ENCODE measurements at regions of chr17 and their contacts with region 1.

Region 1: GRCh38 chr17:17681187-17681848 is at the start of gene RAI1:
- DNase-seq: peak; percentile 93
- H3K4me3 ChIP-seq: peak within 1 kb of the TSS; percentile 82
- H3K27ac ChIP-seq: peak within 1 kb of the TSS; percentile 94
- H3K4me1 ChIP-seq: peaks cover 28% of the 10 kb centered on the region
- H3K27me3 ChIP-seq: no peaks in the 10 kb centered on the region
- CTCF ChIP-seq: peak; percentile 52; the same call in 1 of the 2 replicates
- total RNA-seq, gene RAI1: 46.8 and 58.9 TPM in 2 replicates

Region 2: DNA sequence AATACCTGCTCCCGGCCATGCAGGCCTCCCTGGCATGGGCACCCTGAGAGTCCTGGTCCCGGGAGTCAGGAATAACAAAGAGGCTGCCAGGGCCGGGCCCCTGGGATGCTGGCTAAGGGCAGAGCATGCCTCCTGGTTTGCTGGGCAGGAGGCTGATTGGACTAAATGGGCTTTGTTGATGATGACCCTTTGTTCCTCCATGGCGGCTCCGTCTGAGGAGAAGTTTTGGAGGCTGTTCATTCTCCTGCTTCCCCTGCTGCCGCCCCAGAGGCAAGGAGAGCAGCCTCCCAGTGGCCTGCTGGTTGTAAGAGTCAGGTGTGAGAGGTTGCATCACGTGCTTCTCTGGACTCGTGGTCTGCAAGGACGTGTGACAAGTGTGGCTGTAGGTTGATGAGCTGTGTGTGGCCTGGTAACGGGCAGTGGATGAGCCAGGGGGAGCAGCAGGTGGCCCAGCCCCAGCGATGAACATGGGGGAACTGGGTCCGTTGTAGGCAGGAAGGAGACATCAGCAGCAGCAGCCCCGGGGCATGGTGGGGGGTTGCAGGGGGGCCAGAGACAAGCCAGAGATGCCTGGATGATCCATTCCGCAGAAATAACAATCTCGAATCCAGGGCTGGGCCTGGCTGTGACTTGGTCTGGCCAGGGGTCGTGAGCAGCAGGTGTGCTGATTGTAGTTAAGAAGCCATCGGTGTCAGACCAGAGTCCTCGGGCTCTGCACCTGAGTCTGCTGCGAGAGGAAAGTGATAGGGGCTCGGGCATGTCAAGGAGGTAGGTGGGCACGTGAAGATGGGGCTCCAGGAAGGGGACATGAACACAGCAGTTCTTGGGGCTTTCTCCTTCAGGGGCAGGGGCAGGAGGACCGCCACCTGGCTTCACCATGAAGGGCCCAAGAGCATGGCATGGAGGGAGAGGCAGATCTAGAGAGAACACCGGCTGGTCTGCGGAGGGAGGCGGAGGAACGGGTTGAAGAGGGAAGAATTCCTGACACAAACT is 810.8 kb before region 1 on chr17:
- CTCF ChIA-PET with region 1: no interaction called
- POLR2A ChIA-PET with region 1: no interaction called
- intact Hi-C with region 1: no loop called
- DNase-seq: no peak
- H3K4me3 ChIP-seq: no peak overlapping the region
- H3K27ac ChIP-seq: no peak overlapping the region
- H3K4me1 ChIP-seq: peaks cover 9% of the 10 kb centered on the region
- H3K27me3 ChIP-seq: no peaks in the 10 kb centered on the region
- CTCF ChIP-seq: no peak

Region 3: DNA sequence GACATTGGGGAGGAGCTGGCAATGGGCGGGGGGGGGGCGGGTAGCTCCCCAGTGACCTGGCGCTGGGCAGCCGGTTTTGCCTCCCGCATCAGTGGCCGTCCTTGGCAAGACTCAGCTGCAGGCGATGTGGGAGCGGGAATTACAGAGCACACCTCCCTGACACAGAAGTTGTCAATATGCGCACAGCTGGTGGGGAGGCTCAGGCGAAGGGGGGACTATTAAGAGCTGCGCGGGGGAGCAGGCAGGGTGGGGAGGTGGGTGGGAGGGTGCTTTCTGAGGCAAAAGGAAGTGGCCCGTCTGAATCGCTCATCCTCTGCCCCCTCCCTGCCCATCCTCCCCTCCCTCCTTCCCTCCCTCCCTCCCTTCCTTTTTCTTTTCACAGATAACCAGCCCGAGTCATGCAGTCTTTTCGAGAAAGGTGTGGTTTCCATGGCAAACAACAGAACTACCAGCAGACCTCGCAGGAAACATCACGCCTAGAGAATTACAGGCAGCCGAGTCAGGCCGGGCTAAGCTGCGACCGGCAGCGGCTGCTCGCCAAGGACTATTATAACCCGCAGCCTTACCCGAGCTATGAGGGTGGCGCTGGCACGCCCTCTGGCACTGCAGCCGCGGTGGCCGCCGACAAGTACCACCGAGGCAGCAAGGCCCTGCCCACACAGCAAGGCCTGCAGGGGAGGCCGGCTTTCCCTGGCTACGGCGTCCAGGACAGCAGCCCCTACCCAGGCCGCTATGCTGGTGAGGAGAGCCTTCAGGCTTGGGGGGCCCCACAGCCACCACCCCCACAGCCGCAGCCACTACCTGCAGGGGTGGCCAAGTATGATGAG is 111.4 kb after region 1 on chr17:
- CTCF ChIA-PET with region 1: no interaction called
- POLR2A ChIA-PET with region 1: no interaction called
- intact Hi-C with region 1: loop called (anchors 5 kb)
- DNase-seq: peak; percentile 84
- H3K4me3 ChIP-seq: peak overlapping the region; percentile 10
- H3K27ac ChIP-seq: peak overlapping the region; percentile 30
- H3K4me1 ChIP-seq: peaks cover 58% of the 10 kb centered on the region
- H3K27me3 ChIP-seq: no peaks in the 10 kb centered on the region
- CTCF ChIP-seq: no peak

Region 4: GRCh38 chr17:17812211-17813057 is 131.1 kb after region 1 on chr17:
- CTCF ChIA-PET with region 1: no interaction called
- POLR2A ChIA-PET with region 1: no interaction called
- intact Hi-C with region 1: loop called (anchors 5 kb)
- DNase-seq: peak; percentile 76
- H3K4me3 ChIP-seq: no peak overlapping the region
- H3K27ac ChIP-seq: peak overlapping the region; percentile 38
- H3K4me1 ChIP-seq: peaks cover 37% of the 10 kb centered on the region
- H3K27me3 ChIP-seq: no peaks in the 10 kb centered on the region
- CTCF ChIP-seq: peak; percentile 96

Region 5: DNA sequence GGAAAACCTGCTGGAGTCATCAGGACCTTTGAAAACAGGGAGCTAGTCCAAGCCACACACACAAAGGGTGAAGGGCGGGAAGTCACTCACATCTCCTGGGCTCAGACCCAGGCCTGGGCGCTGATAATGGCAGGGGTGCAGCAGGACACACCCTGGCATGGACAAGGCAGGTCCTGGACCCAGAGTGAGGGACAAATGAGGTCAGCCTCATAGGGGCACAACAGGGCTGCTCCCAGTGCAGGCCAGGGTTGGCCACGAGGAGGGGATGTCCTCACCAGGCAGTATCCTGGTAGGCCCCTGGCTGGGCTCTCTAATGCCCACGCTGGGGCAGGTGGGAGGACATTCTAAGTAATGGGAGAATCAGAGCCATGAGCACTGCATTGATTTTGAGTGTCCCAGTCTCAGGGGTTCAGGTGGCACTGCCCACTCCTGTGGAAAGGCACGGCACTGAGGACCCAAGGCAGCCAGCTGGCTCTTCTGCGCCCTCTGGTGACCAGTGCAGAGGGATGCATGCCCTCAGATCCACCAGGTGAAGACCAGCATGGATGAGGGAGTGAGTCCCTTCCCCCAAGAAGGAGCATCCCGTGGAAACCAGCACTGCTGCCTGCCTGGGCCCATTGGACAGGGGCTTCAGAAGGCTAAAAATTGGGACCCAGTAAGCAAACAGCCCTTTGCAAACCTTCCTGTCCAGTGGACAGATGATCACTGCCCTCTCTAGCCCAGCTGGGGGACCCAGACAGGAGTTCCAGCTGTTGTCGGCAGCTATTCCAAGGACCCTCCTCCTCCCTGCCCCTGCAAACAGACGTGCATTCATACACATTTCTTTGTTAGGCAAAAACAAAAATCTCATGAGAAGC is 178.8 kb after region 1 on chr17:
- CTCF ChIA-PET with region 1: no interaction called
- POLR2A ChIA-PET with region 1: no interaction called
- intact Hi-C with region 1: loop called (anchors 1 kb)
- DNase-seq: peak; percentile 73
- H3K4me3 ChIP-seq: no peak overlapping the region
- H3K27ac ChIP-seq: no peak overlapping the region
- H3K4me1 ChIP-seq: peaks cover 10% of the 10 kb centered on the region
- H3K27me3 ChIP-seq: no peaks in the 10 kb centered on the region
- CTCF ChIP-seq: peak; percentile 98

Region 6: GRCh38 chr17:17919169-17920107 is 238.1 kb after region 1 on chr17:
- CTCF ChIA-PET with region 1: interaction called, 4 read pairs
- POLR2A ChIA-PET with region 1: no interaction called
- intact Hi-C with region 1: loop called (anchors 2 kb)
- DNase-seq: peak; percentile 91
- H3K4me3 ChIP-seq: no peak overlapping the region
- H3K27ac ChIP-seq: peak overlapping the region; percentile 14
- H3K4me1 ChIP-seq: peaks cover 33% of the 10 kb centered on the region
- H3K27me3 ChIP-seq: no peaks in the 10 kb centered on the region
- CTCF ChIP-seq: peak; percentile 95

Region 7: DNA sequence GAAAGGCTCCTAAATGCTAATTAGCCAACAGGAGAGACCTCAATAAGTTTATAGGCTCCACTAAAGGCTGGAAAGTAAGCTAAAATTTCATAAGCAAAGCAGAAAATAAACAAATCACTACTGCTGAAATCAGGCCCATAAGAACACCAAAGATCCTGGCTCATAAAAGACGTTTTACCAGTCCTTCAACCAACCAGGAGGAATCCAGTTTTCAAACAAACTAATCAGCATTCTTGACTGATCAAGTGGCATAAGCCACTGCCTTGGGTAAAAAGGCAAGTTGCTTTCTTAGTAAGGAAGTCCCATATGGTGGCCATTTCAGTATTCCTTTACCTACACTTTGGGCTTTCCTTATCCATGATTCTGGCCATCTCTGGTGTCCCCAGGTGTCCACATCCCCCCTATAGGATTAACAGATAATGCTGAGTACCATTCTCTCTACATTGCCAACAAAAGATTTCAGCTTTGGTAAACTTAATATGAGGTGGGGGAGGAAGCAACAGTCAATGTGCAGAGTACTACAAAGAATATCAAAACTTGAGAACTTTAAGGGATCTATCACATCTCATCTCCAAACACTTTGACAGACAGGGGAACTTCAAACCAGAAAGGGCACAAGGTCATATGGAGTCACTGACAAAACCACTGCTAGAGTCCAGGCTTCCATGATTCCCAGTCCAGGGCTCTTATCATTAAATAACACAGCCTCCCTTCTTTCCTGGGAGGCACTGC is 289.5 kb after region 1 on chr17:
- CTCF ChIA-PET with region 1: no interaction called
- POLR2A ChIA-PET with region 1: no interaction called
- intact Hi-C with region 1: no loop called
- DNase-seq: no peak
- H3K4me3 ChIP-seq: peak overlapping the region; percentile 60
- H3K27ac ChIP-seq: no peak overlapping the region
- H3K4me1 ChIP-seq: peaks cover 12% of the 10 kb centered on the region
- H3K27me3 ChIP-seq: no peaks in the 10 kb centered on the region
- CTCF ChIP-seq: no peak

Region 8: DNA sequence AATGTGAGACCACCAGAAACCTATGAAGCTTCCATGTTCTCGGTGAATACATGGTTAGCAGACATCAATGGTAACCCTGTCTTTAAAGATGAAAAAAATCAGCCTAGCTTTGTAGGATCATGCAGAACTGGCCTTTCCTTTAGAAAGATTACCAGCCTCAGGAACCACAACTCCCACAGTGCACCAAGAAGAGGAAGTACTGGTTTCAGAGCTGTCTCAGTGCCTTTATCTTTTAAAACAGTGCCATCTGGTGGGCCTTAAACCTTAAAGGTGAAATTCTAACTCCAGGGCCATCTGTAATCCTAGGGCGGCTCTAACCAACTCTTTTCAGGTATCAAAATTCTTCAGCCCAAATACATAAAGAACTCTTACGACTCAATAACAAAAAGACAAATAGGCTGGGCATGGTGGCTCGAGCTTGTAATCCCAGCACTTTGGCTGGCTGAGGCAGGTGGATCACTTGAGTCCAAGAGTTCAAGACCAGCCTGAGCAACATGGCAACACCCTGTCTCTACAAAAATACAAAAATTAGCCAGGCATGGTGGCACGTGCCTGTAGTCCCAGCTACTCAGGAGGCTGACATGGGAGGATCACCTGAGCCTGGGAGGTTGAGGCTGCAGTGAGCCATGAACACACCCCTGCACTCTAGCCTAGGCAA is 352.3 kb after region 1 on chr17:
- CTCF ChIA-PET with region 1: no interaction called
- POLR2A ChIA-PET with region 1: no interaction called
- intact Hi-C with region 1: loop called (anchors 2 kb)
- DNase-seq: peak; percentile 91
- H3K4me3 ChIP-seq: no peak overlapping the region
- H3K27ac ChIP-seq: no peak overlapping the region
- H3K4me1 ChIP-seq: peaks cover 9% of the 10 kb centered on the region
- H3K27me3 ChIP-seq: no peaks in the 10 kb centered on the region
- CTCF ChIP-seq: peak; percentile 70

Region 9: DNA sequence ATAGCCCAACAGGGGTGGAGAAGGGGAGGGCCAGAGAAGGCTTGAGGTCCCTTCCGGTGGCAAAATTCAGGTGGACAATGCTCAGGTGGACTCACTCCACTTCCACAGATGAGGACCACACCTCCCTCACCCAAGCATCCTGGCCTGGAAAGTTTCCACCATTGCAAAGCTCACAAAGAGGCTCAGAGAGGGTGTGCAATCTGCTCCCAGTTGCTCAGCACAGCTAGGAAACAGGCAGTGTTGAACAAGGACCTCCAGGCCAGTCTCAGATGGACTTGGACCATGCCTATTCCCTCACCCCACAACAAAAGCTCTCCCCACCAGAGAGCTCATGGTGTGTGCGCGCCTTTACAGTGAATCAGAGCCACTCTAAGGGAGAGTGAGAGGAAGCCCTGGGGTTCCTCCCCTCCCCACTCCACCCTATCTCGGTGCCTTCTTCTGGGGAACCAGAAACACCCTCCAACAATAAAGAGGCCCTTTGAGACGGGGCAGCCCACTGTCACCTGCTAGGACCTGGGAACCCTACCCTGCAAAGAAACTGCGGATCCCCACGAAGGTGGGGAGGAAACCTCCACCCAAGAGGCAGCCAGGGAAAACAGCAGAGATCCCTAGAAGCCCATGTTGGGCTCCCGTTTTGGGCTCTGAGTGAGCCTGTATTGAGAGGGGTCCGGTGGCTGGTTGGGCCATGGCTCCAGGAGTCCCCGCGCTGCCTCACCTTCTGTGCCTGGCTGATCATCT is 1321.7 kb after region 1 on chr17:
- CTCF ChIA-PET with region 1: interaction called, 10 read pairs
- POLR2A ChIA-PET with region 1: no interaction called
- intact Hi-C with region 1: no loop called
- DNase-seq: no peak
- H3K4me3 ChIP-seq: peak overlapping the region; percentile 68
- H3K27ac ChIP-seq: no peak overlapping the region
- H3K4me1 ChIP-seq: no peaks in the 10 kb centered on the region
- H3K27me3 ChIP-seq: no peaks in the 10 kb centered on the region
- CTCF ChIP-seq: no peak